ENCODE measurements at regions of chr11 and their contacts with region 1.

Region 1: GRCh38 chr11:19566583-19567379 is 145.9 kb upstream of the NAV2 start:
- DNase-seq: no peak
- ATAC-seq: no peak
- H3K4me3 ChIP-seq: no peak overlapping the region
- H3K27ac ChIP-seq: no peak overlapping the region
- H3K4me1 ChIP-seq: no peaks in the 10 kb centered on the region
- H3K27me3 ChIP-seq: no peaks in the 10 kb centered on the region; a peak in 2 of 4 replicates
- CTCF ChIP-seq: no peak
- EP300 ChIP-seq: no peak
- POLR2A ChIP-seq: no peak
- RAD21 ChIP-seq: no peak

Region 2: DNA sequence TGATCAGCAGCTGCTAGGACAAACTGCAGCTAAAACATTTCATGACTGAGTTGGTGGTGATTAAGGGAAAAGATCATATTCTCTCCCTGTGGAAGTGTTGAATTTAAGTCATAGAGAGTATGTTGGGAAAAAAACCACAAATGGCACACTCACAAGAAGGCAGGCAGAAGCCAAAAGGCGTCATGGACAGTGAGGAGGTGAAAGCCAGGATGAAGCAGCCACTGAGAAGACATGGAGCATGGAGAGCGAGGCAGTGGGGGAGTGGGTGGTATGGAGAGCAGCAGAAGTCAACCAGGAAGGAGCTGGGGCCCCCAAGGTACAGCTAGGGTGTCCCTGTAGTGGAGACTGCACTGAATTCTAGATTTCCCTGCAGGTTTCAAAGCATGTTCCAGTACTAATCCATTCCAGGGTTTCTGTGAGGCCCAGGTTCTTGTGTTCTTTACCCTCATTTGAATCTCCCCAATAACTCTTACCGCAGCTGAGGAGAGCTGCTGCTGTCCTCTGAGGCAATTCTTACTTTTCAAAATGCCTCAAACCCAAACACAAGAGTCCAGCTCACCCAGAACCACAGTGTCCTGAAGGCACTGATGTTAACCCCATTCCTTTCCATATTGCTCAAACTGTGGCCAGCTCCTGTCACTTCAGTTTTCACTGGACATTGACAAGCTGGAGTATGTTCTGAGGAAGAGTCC is 134.3 kb before region 1 on chr11:
- CTCF ChIA-PET with region 1: no interaction called
- POLR2A ChIA-PET with region 1: no interaction called
- RAD21 ChIA-PET with region 1: no interaction called
- SMC1A ChIA-PET with region 1: no interaction called
- in situ Hi-C with region 1: no loop called
- intact Hi-C with region 1: no loop called
- DNase-seq: peak; percentile 74
- ATAC-seq: peak; percentile 74
- H3K4me3 ChIP-seq: peak overlapping the region; percentile 56
- H3K27ac ChIP-seq: peak overlapping the region; percentile 85
- H3K4me1 ChIP-seq: peaks cover 66% of the 10 kb centered on the region
- H3K27me3 ChIP-seq: no peaks in the 10 kb centered on the region
- CTCF ChIP-seq: no peak
- EP300 ChIP-seq: no peak
- POLR2A ChIP-seq: no peak
- RAD21 ChIP-seq: no peak

Region 3: GRCh38 chr11:19493446-19494213 is 73.2 kb before region 1 on chr11:
- CTCF ChIA-PET with region 1: no interaction called
- POLR2A ChIA-PET with region 1: no interaction called
- RAD21 ChIA-PET with region 1: no interaction called
- SMC1A ChIA-PET with region 1: no interaction called
- in situ Hi-C with region 1: no loop called
- intact Hi-C with region 1: no loop called
- DNase-seq: no peak
- ATAC-seq: no peak
- H3K4me3 ChIP-seq: no peak overlapping the region
- H3K27ac ChIP-seq: no peak overlapping the region
- H3K4me1 ChIP-seq: no peaks in the 10 kb centered on the region
- H3K27me3 ChIP-seq: no peaks in the 10 kb centered on the region
- CTCF ChIP-seq: no peak
- EP300 ChIP-seq: no peak
- POLR2A ChIP-seq: no peak
- RAD21 ChIP-seq: no peak

Region 4: GRCh38 chr11:19800162-19800561 is 233.4 kb after region 1 on chr11:
- CTCF ChIA-PET with region 1: interaction called, 17 read pairs
- POLR2A ChIA-PET with region 1: no interaction called
- RAD21 ChIA-PET with region 1: no interaction called
- SMC1A ChIA-PET with region 1: interaction called, 17 read pairs
- in situ Hi-C with region 1: no loop called
- intact Hi-C with region 1: loop called (anchors 2 kb)
- DNase-seq: no peak
- ATAC-seq: peak; percentile 52; the same call in 2 of the 3 replicates
- H3K4me3 ChIP-seq: no peak overlapping the region
- H3K27ac ChIP-seq: no peak overlapping the region
- H3K4me1 ChIP-seq: no peaks in the 10 kb centered on the region
- H3K27me3 ChIP-seq: no peaks in the 10 kb centered on the region
- CTCF ChIP-seq: peak; percentile 12 to 41 (median 15); a peak in 3 of 6 replicates
- EP300 ChIP-seq: no peak
- POLR2A ChIP-seq: no peak
- RAD21 ChIP-seq: peak; percentile 46

Region 5: GRCh38 chr11:19808076-19808911 is 241.5 kb after region 1 on chr11:
- CTCF ChIA-PET with region 1: interaction called, 38 read pairs
- POLR2A ChIA-PET with region 1: no interaction called
- RAD21 ChIA-PET with region 1: interaction called, 9 read pairs
- SMC1A ChIA-PET with region 1: interaction called, 7 read pairs
- in situ Hi-C with region 1: no loop called
- intact Hi-C with region 1: loop called (anchors 2 kb)
- DNase-seq: no peak
- ATAC-seq: no peak
- H3K4me3 ChIP-seq: no peak overlapping the region
- H3K27ac ChIP-seq: no peak overlapping the region
- H3K4me1 ChIP-seq: no peaks in the 10 kb centered on the region
- H3K27me3 ChIP-seq: no peaks in the 10 kb centered on the region
- CTCF ChIP-seq: peak in 1 of 3 experiments; percentile 52; a peak in 2 of 6 replicates
- EP300 ChIP-seq: no peak
- POLR2A ChIP-seq: no peak
- RAD21 ChIP-seq: peak; percentile 43; the same call in 1 of the 2 replicates

Region 6: GRCh38 chr11:19820100-19820499 is 253.3 kb after region 1 on chr11:
- CTCF ChIA-PET with region 1: no interaction called
- POLR2A ChIA-PET with region 1: no interaction called
- RAD21 ChIA-PET with region 1: no interaction called
- SMC1A ChIA-PET with region 1: no interaction called
- in situ Hi-C with region 1: no loop called
- intact Hi-C with region 1: no loop called
- DNase-seq: no peak
- ATAC-seq: no peak
- H3K4me3 ChIP-seq: no peak overlapping the region
- H3K27ac ChIP-seq: no peak overlapping the region
- H3K4me1 ChIP-seq: no peaks in the 10 kb centered on the region; the same call in 1 of the 2 replicates
- H3K27me3 ChIP-seq: no peaks in the 10 kb centered on the region
- CTCF ChIP-seq: no peak
- EP300 ChIP-seq: no peak
- POLR2A ChIP-seq: no peak
- RAD21 ChIP-seq: no peak